K562 (cell line): ENCODE measurements at regions of chr6 and their contacts with region 1.

Region 1: DNA sequence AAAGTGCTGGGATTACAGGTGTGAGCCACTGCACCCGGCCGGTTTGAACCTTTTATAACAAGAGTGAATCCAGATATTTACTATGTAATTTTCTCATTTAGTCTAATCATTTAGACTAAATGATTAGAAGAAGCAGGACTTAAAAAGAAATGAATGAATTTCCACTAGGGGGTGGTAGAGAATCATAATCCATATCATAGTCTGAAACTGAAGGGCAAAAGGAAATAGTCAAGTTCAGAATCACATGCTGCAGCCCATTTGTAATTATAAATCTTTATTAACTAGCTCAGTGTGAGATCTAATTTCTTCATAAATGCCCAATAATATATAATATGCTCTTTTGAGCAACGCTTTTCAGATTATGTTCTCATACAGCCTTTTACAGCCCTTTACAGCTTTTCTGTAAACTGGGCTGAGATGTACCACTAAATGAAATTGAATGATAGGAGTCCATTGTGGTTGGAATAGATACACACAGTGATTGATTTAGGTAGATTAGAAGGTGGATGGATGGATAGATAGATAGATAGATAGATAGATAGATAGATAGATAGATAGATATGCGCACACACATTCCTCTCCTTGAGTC is 31.8 kb downstream of the PSMB9 start:
- DNase-seq: peak in 3 of 4 experiments; percentile 31 to 78 (median 63)
- ATAC-seq: peak; percentile 81
- H3K4me3 ChIP-seq: no peak overlapping the region
- H3K27ac ChIP-seq: no peak overlapping the region
- H3K4me1 ChIP-seq: no peaks in the 10 kb centered on the region
- H3K27me3 ChIP-seq: peaks cover 8 to 13% of the 10 kb centered on the region in 2 experiments; a peak in 4 of 5 replicates
- CTCF ChIP-seq: peak; percentile 39 to 87 (median 56); a peak in 4 of 6 replicates
- EP300 ChIP-seq: no peak
- POLR2A ChIP-seq: no peak
- RAD21 ChIP-seq: peak; percentile 91 to 93

Region 2: GRCh38 chr6:32529697-32530429 is 355.9 kb before region 1 on chr6 and contains the start of gene HLA-DRB5:
- CTCF ChIA-PET with region 1: no interaction called
- POLR2A ChIA-PET with region 1: no interaction called
- in situ Hi-C with region 1: no loop called
- intact Hi-C with region 1: no loop called
- DNase-seq: no peak
- ATAC-seq: no peak
- H3K4me3 ChIP-seq: no peak within 1 kb of the TSS
- H3K27ac ChIP-seq: no peak within 1 kb of the TSS
- H3K4me1 ChIP-seq: no peaks in the 10 kb centered on the region
- H3K27me3 ChIP-seq: no peaks in the 10 kb centered on the region
- CTCF ChIP-seq: no peak
- EP300 ChIP-seq: no peak
- POLR2A ChIP-seq: no peak
- RAD21 ChIP-seq: no peak
- polyA plus RNA-seq, gene HLA-DRB5: not detected

Region 3: DNA sequence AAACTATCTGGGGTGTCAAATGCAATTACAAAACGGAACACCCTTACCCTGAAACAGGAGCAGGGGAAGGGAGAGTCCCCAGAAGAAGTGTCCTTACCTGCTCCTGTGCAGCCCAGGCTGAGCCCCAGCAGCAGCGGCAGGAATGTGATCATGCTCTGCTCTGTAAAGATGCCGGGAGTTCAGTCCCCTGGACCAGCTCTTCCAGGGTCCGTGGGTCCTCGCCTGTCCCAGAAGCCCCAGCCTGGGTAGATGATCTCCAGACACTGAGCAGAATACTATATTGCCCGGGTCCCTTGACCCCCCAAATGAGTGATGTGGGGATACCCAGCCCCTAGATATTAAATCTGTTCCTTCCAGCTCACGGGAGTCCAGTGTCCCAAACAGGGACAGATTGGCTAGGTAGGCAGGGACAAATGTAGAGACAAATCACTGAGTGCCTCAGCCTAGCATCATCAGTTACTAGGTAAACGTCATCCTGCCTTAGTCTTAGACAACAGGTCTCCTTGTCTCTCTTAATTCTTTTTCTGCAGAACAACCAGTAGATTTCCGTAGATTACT is 54.9 kb after region 1 on chr6 and contains the start of gene HLA-DMB:
- CTCF ChIA-PET with region 1: interaction called, 4 read pairs
- POLR2A ChIA-PET with region 1: no interaction called
- in situ Hi-C with region 1: loop called (anchors 5 kb)
- intact Hi-C with region 1: loop called (anchors 5 kb)
- DNase-seq: peak in 2 of 4 experiments; percentile 33 to 58
- ATAC-seq: peak; percentile 90
- H3K4me3 ChIP-seq: no peak within 1 kb of the TSS
- H3K27ac ChIP-seq: no peak within 1 kb of the TSS
- H3K4me1 ChIP-seq: no peaks in the 10 kb centered on the region
- H3K27me3 ChIP-seq: peaks cover 27 to 41% of the 10 kb centered on the region in 2 experiments
- CTCF ChIP-seq: no peak
- EP300 ChIP-seq: no peak
- POLR2A ChIP-seq: no peak
- RAD21 ChIP-seq: no peak
- polyA plus RNA-seq, gene HLA-DMB: not detected

Region 4: GRCh38 chr6:32947552-32948465 is 62.0 kb after region 1 on chr6:
- CTCF ChIA-PET with region 1: interaction called, 7 read pairs
- POLR2A ChIA-PET with region 1: interaction called, 3 read pairs
- in situ Hi-C with region 1: no loop called
- intact Hi-C with region 1: loop called (anchors 5 kb)
- DNase-seq: peak in 2 of 4 experiments; percentile 48 to 62
- ATAC-seq: peak; percentile 86
- H3K4me3 ChIP-seq: no peak overlapping the region
- H3K27ac ChIP-seq: no peak overlapping the region
- H3K4me1 ChIP-seq: no peaks in the 10 kb centered on the region
- H3K27me3 ChIP-seq: peaks cover 2 to 24% of the 10 kb centered on the region in 2 experiments; a peak in 3 of 5 replicates
- CTCF ChIP-seq: peak; percentile 63 to 77 (median 71)
- EP300 ChIP-seq: no peak
- POLR2A ChIP-seq: no peak
- RAD21 ChIP-seq: peak; percentile 56 to 83

Region 5: GRCh38 chr6:32984605-32985389 is 99.0 kb after region 1 on chr6:
- CTCF ChIA-PET with region 1: interaction called, 84 read pairs
- POLR2A ChIA-PET with region 1: interaction called, 4 read pairs
- in situ Hi-C with region 1: loop called (anchors 5 kb)
- intact Hi-C with region 1: loop called (anchors 1 kb)
- DNase-seq: peak; percentile 80 to 93 (median 80)
- ATAC-seq: peak; percentile 75
- H3K4me3 ChIP-seq: no peak overlapping the region
- H3K27ac ChIP-seq: no peak overlapping the region
- H3K4me1 ChIP-seq: peaks cover 0 to 6% of the 10 kb centered on the region in 2 experiments; a peak in 2 of 5 replicates
- H3K27me3 ChIP-seq: peaks cover 8 to 15% of the 10 kb centered on the region in 2 experiments; a peak in 3 of 5 replicates
- CTCF ChIP-seq: peak; percentile 95 to 99 (median 97)
- EP300 ChIP-seq: no peak
- POLR2A ChIP-seq: no peak
- RAD21 ChIP-seq: peak; percentile 97 to 99

Region 6: DNA sequence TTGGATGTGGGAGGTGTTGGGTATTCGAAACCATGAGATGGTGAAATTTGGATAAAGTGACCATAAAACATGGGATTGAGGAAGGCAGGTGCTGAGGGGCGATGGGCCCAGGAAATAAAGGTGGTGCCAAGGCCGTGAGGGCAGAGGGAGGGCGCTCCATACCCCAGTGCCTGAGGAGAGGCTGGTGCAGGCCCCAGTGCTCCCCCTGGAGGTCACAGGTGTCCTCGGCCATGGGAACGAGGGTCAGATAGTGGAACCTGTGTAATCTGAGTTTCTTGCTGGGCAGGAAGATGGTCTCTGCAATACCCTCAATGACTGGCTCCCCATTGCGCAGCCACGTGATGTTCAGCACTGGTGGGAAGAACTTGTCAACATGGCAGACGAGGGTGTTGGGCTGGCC is 206.2 kb after region 1 on chr6:
- CTCF ChIA-PET with region 1: interaction called, 4 read pairs
- POLR2A ChIA-PET with region 1: no interaction called
- in situ Hi-C with region 1: no loop called
- intact Hi-C with region 1: loop called (anchors 10 kb)
- DNase-seq: peak in 3 of 4 experiments; percentile 36 to 64 (median 50)
- ATAC-seq: peak; percentile 94
- H3K4me3 ChIP-seq: no peak overlapping the region
- H3K27ac ChIP-seq: no peak overlapping the region
- H3K4me1 ChIP-seq: no peaks in the 10 kb centered on the region
- H3K27me3 ChIP-seq: peaks cover 0 to 39% of the 10 kb centered on the region in 2 experiments; a peak in 2 of 5 replicates
- CTCF ChIP-seq: peak; percentile 84 to 96 (median 90)
- EP300 ChIP-seq: no peak
- POLR2A ChIP-seq: no peak
- RAD21 ChIP-seq: peak in 1 of 2 experiments; percentile 62; a peak in 2 of 4 replicates